ENCODE measurements at regions of chr9 and their contacts with region 1.

Region 1: DNA sequence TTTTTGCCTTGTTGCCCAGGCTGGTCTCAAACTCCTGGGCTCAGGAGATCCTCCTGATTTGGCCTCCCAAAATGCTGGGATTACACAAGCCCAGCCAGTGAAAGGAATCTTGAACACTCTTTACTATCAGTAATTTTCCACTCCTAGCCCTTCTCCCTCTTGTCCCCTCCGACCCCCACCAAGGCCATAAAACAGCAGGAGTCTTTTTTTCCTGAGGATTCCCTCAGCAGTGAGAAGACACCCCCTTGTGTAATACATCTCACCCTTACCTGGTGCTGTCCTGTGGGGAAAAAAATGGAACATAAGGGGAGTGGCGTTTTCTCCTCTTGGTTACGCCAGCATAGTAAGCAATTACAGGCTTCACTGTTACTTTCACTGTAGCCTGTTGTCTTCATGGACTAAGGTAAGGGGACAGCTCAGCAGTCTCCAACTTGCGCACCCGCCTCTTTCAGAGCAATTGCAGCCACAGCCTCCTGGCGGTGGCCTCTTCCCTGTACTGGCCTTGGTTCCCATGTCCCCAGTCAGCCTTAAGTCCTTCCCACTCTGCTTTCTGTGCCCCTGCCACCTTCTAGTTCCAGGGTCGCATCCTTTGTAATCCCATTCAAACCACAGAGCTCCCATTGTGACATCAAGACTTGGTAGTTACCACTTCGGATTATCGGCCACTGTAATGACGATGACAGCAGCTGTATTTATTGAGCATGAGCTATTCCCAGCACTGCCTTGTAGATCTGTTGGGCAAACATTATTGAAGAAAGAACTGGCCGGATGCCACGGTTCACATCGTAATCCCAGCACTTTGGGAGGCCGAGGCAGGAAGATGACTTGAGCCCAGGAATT is 10.0 kb downstream of the NAIF1 start:
- DNase-seq: no peak
- H3K4me3 ChIP-seq: no peak overlapping the region
- H3K27ac ChIP-seq: no peak overlapping the region
- H3K4me1 ChIP-seq: peaks cover 30% of the 10 kb centered on the region
- H3K27me3 ChIP-seq: no peaks in the 10 kb centered on the region
- CTCF ChIP-seq: no peak

Region 2: DNA sequence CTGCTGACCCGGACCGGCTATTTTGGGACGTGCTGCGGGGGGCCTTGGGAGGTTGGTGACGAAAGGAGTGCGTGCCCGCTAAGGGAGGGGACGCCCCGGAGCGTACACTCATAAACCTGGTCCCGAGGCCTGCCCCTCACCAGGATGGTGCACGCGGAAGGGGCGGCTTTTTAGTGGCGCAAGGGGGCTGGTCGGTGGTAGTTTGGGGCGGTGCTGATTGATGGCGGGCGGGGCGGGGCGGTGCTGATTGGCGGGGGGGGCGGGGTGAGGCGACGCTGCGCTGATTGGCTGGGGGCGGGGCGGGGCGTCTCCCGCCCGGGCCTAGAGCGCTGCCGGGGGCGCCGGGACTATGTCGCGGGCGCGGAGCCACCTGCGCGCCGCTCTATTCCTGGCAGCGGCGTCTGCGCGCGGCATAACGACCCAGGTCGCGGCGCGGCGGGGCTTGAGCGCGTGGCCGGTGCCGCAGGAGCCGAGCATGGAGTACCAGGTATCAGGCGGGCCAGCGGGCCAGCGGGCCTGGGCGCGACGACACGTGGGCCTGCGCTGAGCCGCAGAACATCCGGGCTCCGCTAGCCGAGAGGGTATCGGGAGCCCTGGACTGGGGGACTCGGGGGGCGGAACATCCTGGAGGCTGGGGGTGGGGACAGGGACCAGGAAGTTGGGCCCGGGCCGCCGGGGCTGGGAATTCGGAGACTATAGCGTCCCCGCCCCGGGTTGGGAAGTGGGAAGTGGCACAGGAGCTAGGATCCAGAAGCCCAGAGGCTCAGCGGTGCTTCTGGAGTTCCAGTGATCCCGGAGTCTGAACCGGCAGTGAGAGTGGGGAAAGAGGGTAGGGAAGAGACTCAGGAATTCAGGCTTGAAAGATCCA is 254.3 kb before region 1 on chr9 and contains the start of gene FPGS:
- CTCF ChIA-PET with region 1: no interaction called
- POLR2A ChIA-PET with region 1: interaction called, 11 read pairs
- intact Hi-C with region 1: no loop called
- DNase-seq: peak; percentile 93
- H3K4me3 ChIP-seq: peak within 1 kb of the TSS; percentile 97
- H3K27ac ChIP-seq: peak within 1 kb of the TSS; percentile 96
- H3K4me1 ChIP-seq: peaks cover 14% of the 10 kb centered on the region
- H3K27me3 ChIP-seq: no peaks in the 10 kb centered on the region
- CTCF ChIP-seq: no peak
- total RNA-seq, gene FPGS: 74.9 and 78.2 TPM in 2 replicates

Region 3: DNA sequence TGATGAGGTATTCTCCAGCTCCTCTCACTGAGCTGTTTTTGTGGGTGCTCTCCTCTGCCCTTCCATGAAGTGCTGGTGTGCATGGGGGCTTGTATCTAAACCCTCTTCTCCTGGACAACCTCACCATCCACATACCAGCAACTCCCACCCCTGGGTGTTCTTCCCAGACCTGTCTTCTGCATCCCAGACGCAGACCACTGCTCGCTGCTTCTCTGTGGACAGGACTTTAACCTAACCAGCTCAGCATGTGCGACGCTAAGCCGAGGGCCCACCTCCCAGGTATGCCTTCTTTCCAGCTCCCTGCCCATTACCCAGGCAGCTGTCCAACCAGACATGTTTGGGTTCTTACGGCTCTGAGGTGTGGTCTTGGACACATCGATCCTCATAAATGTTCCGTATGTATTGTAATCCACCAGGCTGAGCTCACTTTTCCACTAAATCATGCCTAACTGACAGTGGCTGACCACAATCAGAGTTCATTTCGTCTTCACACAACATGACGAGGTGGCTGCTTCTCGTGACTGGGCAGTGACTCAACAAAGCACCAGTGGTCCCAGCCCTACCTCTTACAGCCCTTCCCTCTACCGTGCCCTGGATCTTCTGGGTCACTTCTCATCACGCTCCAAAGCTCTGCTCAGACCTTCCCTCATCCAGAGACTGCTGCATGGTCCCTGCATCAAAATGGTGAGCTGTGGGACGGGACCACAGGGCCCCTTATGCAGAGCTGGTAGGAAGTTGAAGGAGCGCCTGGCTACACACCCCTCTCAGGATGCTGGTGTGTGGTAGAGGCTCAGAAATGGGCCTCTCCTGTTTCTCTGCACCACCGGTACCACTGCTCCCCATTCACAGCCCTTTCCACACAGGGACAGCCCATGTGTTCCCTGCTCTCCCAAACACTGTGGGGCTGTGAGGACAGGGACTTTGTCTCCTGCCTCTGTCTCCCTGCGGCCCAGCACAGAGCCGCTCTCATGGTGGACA is 80.0 kb after region 1 on chr9:
- CTCF ChIA-PET with region 1: no interaction called
- POLR2A ChIA-PET with region 1: interaction called, 31 read pairs
- intact Hi-C with region 1: no loop called
- DNase-seq: no peak
- H3K4me3 ChIP-seq: no peak overlapping the region
- H3K27ac ChIP-seq: no peak overlapping the region
- H3K4me1 ChIP-seq: no peaks in the 10 kb centered on the region
- H3K27me3 ChIP-seq: no peaks in the 10 kb centered on the region
- CTCF ChIP-seq: no peak

Region 4: GRCh38 chr9:129028192-129028957 is 971.3 kb after region 1 on chr9 and contains the start of gene SH3GLB2:
- CTCF ChIA-PET with region 1: no interaction called
- POLR2A ChIA-PET with region 1: no interaction called
- intact Hi-C with region 1: no loop called
- DNase-seq: peak; percentile 90
- H3K4me3 ChIP-seq: peak within 1 kb of the TSS; percentile 69
- H3K27ac ChIP-seq: peak within 1 kb of the TSS; percentile 49
- H3K4me1 ChIP-seq: peaks cover 20% of the 10 kb centered on the region
- H3K27me3 ChIP-seq: no peaks in the 10 kb centered on the region
- CTCF ChIP-seq: peak; percentile 77
- total RNA-seq, gene SH3GLB2: 52.7 and 59.4 TPM in 2 replicates

Measured in A673 (cell line).